ENCODE measurements at regions of chr14 and their contacts with region 1.

Region 1: DNA sequence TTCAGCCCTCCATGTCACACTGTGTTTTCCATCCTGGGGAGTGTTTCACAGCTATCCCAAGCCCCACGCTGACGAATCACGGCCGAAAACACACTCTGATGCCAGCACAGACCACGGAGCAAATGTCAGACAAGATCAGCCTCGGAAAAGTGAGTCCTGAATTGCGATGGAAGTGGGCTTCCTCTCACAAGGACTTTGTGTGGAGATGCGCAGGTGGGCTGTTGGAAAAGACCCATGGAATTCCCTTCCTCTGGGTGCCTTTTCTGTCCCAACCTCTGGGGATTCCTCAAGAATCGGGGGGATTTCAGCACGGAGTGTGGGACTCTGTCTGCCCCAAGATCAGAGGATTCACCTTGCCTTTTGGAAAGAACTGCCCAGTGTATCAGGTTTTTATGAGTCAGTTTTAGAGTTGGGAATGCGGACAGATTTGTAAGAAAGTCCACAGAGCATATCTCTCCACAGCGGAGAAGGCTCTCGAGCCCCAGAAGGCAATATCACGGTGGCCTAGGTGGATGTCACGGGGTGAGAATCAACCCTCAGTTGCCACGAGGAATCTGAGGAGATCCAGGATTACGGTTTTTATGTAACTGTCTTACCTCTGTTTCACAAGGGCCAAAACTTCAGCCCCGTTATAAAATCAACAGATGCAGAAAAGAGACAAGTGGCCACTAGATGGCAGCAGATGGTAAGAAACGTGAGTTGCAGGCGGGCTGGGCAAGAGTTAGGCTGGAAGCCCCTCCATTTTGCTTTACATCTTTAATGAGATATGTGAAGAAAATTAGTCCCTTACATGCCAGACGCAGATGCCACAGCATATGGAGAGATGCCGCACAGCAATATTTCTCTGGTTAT is 201.9 kb downstream of the DAD1 start:
- DNase-seq: peak in 1 of 2 donors; percentile 87
- H3K4me3 ChIP-seq: peak overlapping the region in 1 of 2 donors; percentile 52
- H3K27ac ChIP-seq: no peak overlapping the region
- H3K4me1 ChIP-seq: peaks cover 0 to 3% of the 10 kb centered on the region in 2 donors
- H3K27me3 ChIP-seq: no peaks in the 10 kb centered on the region
- CTCF ChIP-seq: peak; percentile 74 to 77 (median 77)

Region 2: GRCh38 chr14:22472935-22473854 is 86.0 kb after region 1 on chr14:
- intact Hi-C with region 1: loop called (anchors 1 kb)
- DNase-seq: no peak
- H3K4me3 ChIP-seq: no peak overlapping the region
- H3K27ac ChIP-seq: no peak overlapping the region
- H3K4me1 ChIP-seq: peaks cover 0 to 3% of the 10 kb centered on the region in 2 donors
- H3K27me3 ChIP-seq: no peaks in the 10 kb centered on the region
- CTCF ChIP-seq: peak in 1 of 3 experiments; percentile 53

Region 3: DNA sequence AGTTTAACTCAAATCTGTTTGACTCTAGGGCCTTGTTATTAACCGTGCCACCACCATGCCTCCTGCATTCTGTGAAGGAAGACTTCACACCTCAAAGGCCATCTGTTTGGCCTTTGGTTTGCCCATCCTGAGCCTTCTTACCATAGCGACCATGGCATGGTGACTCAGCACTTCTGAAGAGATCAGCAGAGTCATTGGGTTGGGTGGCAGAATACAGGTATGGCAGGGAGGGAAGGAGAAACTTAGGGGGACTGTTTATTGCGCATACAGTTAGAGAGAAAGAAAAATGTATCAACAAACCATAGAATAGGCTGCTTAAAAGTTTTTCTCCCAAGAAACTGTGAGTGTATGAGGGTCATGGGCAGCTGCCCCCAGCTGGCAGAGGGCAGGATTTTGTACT is 152.7 kb after region 1 on chr14:
- intact Hi-C with region 1: loop called (anchors 5 kb)
- DNase-seq: peak in 1 of 2 donors; percentile 55
- H3K4me3 ChIP-seq: no peak overlapping the region
- H3K27ac ChIP-seq: no peak overlapping the region
- H3K4me1 ChIP-seq: peaks cover 0 to 11% of the 10 kb centered on the region in 2 donors
- H3K27me3 ChIP-seq: no peaks in the 10 kb centered on the region
- CTCF ChIP-seq: no peak

Region 4: GRCh38 chr14:22653012-22653621 is 266.0 kb after region 1 on chr14:
- intact Hi-C with region 1: loop called (anchors 10 kb)
- DNase-seq: peak in 1 of 2 donors; percentile 71
- H3K4me3 ChIP-seq: no peak overlapping the region
- H3K27ac ChIP-seq: no peak overlapping the region
- H3K4me1 ChIP-seq: peaks cover 0 to 2% of the 10 kb centered on the region in 2 donors
- H3K27me3 ChIP-seq: no peaks in the 10 kb centered on the region
- CTCF ChIP-seq: peak; percentile 51 to 67 (median 57)

Region 5: GRCh38 chr14:22766456-22767322 is 379.5 kb after region 1 on chr14 and contains the start of gene OXA1L:
- intact Hi-C with region 1: loop called (anchors 10 kb)
- DNase-seq: peak; percentile 89 to 98
- H3K4me3 ChIP-seq: peak within 1 kb of the TSS; percentile 84 to 94
- H3K27ac ChIP-seq: peak within 1 kb of the TSS; percentile 78 to 85
- H3K4me1 ChIP-seq: peaks cover 0 to 19% of the 10 kb centered on the region in 2 donors
- H3K27me3 ChIP-seq: no peaks in the 10 kb centered on the region
- CTCF ChIP-seq: no peak
- total RNA-seq, gene OXA1L: 68.3 TPM

Measured in ascending aorta (tissue), 2 donors.